ENCODE measurements at regions of chr9 and their contacts with region 1.

Region 1: DNA sequence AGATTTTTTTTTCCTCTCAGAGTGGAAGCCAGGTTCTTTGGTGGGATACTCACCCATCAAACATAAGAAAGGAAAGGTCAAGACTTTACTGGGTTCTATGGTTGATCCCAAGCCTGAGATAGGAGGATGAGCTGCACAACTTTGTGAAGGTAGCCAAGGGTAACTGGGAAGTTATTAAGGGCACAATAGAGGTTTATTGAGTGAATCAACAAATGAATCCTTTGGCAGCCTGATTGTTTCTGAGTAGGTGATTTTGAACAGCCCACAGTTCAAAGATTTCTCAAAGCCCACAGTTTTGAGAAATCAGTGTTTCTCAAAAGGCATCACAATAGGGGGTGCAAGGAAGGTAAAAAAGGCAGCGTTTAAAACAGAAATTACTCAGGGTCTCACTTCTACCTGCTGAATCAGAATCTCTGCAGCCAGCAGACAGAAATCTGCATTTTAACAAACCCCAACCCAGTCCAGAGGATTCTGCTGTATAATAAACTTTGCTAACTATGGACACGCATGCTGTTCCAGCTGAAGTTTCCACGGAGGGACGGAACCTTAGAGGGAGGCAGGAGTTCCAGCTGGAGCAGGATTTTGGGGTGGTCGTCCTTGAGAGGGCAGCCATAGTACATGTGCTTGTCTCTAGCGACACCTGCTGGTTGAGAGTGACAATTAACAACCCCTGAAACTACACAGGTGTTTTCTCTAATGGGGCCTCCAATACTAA is 32.7 kb upstream of the FSD1L start:
- DNase-seq: peak; percentile 53 to 59
- ATAC-seq: peak; percentile 81 to 88; a peak in 5 of 6 replicates
- H3K4me3 ChIP-seq: no peak overlapping the region
- H3K27ac ChIP-seq: peak overlapping the region; percentile 26 to 65; a peak in 3 of 6 replicates
- H3K4me1 ChIP-seq: peaks cover 10% of the 10 kb centered on the region; the same call in 1 of the 3 replicates
- CTCF ChIP-seq: peak; percentile 95
- EP300 ChIP-seq: no peak
- POLR2A ChIP-seq: no peak
- RAD21 ChIP-seq: peak; percentile 97 to 99

Region 2: DNA sequence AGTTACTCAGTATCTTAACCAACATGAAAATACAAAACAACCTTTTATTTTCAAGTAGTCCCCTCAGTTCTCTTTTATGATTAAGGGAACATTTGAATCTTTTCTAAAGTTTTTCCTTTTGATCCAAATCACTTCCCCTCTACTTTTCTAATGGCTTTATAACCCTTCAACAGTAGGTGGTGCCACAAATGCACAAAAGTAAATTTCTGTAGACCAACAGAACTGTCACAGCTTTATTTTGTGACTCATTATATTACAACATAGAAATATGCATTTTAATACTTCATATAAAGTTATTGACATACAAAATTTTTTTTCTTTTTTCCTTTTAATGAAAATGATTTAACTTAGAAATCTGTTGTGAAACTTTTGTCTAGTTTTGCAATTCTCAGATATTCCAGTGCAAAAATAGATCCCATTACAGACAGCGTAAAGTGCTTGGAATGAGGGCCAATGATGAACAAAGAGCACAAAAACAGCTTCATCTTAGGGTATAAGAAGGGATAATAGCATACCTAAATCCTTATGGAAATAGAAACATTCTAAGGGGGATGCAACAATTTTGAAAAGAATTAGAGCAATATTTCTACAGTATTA is 634.2 kb before region 1 on chr9:
- CTCF ChIA-PET with region 1: interaction called, 32 read pairs
- POLR2A ChIA-PET with region 1: no interaction called
- DNase-seq: peak; percentile 21 to 44
- ATAC-seq: peak; percentile 80
- H3K4me3 ChIP-seq: no peak overlapping the region
- H3K27ac ChIP-seq: no peak overlapping the region
- H3K4me1 ChIP-seq: 0 out of 3 replicates have a peak, but pooled peaks cover 3% of the 10 kb centered on the region
- CTCF ChIP-seq: peak; percentile 70
- EP300 ChIP-seq: no peak
- POLR2A ChIP-seq: no peak
- RAD21 ChIP-seq: peak; percentile 74 to 77

Region 3: DNA sequence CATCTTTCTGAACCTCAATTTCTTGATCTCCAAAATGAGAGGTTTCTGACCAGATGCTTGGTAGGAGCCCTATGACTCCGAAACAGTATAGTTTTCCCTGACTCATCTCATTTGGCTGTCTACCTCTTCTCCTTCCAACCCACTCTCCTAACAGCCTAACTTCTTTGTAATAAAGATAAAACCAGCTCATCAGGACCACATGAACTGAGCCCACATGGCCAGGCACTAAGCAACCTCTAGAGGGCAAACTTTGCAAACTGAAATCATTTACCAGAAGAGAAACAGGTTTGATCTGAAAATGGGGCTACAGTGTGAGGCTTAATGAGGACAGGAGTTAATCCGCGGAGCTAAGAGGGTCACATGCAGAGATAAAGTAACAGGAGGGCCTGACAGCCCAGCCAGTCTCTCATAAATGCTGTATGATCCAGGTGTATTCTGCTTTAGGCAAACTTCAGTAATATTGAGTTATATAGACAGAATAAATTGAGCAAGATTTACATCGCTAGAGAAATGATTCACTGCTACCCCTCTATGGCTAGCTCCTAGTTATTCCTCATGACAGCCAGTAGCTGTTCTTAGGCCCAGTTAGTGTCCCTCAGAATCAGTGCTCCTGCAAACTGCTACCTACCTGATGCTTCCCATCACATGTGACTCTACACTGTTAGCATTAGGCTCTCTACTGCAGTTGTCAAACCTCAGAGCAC is 551.8 kb before region 1 on chr9:
- CTCF ChIA-PET with region 1: interaction called, 18 read pairs
- POLR2A ChIA-PET with region 1: no interaction called
- DNase-seq: peak; percentile 68 to 75
- ATAC-seq: peak; percentile 84 to 94
- H3K4me3 ChIP-seq: no peak overlapping the region
- H3K27ac ChIP-seq: peak overlapping the region; percentile 28 to 53; a peak in 5 of 6 replicates
- H3K4me1 ChIP-seq: peaks cover 27% of the 10 kb centered on the region
- CTCF ChIP-seq: peak; percentile 80
- EP300 ChIP-seq: no peak
- POLR2A ChIP-seq: no peak
- RAD21 ChIP-seq: peak; percentile 84 to 89

Region 4: DNA sequence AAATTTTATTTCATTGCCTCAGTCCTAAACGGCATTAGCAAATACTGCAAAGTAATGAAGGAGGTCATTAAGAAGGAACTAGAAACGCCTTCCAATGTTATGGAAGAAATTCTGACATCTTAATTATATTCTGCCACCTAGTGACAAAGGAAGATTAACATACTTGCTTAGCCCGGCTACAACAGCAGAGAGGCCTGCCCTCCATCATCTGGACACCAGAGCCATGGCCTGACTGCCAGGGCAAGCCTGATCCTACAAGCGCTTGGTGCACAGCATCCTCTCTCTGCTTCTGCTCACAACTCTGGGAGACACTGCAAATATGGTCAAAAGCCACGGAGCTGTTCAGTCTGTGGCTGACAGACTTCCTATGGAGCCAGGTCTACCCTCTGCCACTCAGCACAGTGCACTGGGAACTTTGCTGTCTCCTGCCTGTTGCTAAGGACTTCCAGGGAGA is 257.9 kb before region 1 on chr9:
- CTCF ChIA-PET with region 1: interaction called, 185 read pairs
- POLR2A ChIA-PET with region 1: no interaction called
- DNase-seq: peak; percentile 78 to 80
- ATAC-seq: peak; percentile 93 to 95
- H3K4me3 ChIP-seq: no peak overlapping the region
- H3K27ac ChIP-seq: peak overlapping the region; percentile 38 to 74; a peak in 5 of 6 replicates
- H3K4me1 ChIP-seq: peaks cover 36% of the 10 kb centered on the region
- CTCF ChIP-seq: peak; percentile 75
- EP300 ChIP-seq: no peak
- POLR2A ChIP-seq: no peak
- RAD21 ChIP-seq: peak; percentile 85 to 93

Region 5: GRCh38 chr9:105244003-105244733 is 170.9 kb before region 1 on chr9 and contains the start of gene SLC44A1:
- CTCF ChIA-PET with region 1: interaction called, 45 read pairs
- POLR2A ChIA-PET with region 1: interaction called, 3 read pairs
- DNase-seq: peak; percentile 69 to 96
- ATAC-seq: peak; percentile 94 to 98
- H3K4me3 ChIP-seq: peak within 1 kb of the TSS; percentile 97
- H3K27ac ChIP-seq: peak within 1 kb of the TSS; percentile 93 to 95
- H3K4me1 ChIP-seq: peaks cover 35% of the 10 kb centered on the region
- CTCF ChIP-seq: no peak; the same call in 2 of the 3 replicates
- EP300 ChIP-seq: 0 out of 5 replicates have a peak, but pooled peaks of 1 of the 2 experiments have one; percentile 31
- POLR2A ChIP-seq: peak; percentile 56
- RAD21 ChIP-seq: peak; percentile 23 to 49; a peak in 2 of 5 replicates
- polyA plus RNA-seq, gene SLC44A1: 19.6 and 38.8 TPM in 2 replicates

Region 6: GRCh38 chr9:105392531-105392930 is 22.6 kb before region 1 on chr9:
- CTCF ChIA-PET with region 1: interaction called, 16 read pairs
- POLR2A ChIA-PET with region 1: no interaction called
- DNase-seq: no peak
- ATAC-seq: no peak
- H3K4me3 ChIP-seq: no peak overlapping the region
- H3K27ac ChIP-seq: no peak overlapping the region
- H3K4me1 ChIP-seq: no peaks in the 10 kb centered on the region
- CTCF ChIP-seq: no peak
- EP300 ChIP-seq: no peak
- POLR2A ChIP-seq: no peak
- RAD21 ChIP-seq: no peak

Region 7: DNA sequence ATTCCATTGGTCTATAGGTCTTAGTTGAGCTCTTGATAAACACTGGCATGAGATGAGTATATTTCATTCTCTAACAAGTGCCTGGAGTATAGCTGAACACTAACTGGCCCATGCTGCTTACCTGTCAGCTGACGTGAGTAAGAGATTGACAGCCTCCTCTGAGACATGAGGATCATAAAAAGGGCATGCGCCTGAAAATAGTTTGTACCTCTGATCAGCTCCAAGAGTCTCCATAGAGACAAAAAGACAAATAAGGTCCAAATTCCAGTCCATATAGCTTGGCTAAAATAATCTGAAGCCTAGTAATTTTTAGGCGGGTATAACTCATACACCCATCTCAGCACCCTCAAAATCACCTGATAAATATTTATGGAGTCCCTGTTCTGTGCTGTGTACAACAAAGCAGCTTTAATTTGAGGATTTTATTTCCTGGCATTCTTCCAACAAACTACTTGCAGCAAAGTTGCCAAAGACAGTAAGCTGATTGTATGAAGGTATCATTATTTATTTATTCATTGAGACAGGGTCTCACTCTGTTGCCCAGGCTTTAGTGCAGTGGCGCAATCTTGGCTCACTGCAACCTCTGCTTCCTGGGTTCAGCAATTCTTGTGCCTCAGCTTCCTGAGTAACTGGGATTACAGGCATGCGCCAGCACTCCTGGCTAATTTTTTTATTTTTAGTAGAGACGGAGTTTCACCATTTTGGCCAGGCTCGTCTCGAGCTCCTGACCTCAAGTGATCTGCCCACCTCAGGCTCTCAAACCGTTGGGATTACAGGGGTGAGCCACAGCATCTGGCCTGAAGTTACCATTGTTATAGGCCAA is 16.5 kb after region 1 on chr9:
- CTCF ChIA-PET with region 1: interaction called, 15 read pairs
- POLR2A ChIA-PET with region 1: no interaction called
- DNase-seq: no peak
- ATAC-seq: no peak
- H3K4me3 ChIP-seq: no peak overlapping the region
- H3K27ac ChIP-seq: no peak overlapping the region
- H3K4me1 ChIP-seq: no peaks in the 10 kb centered on the region
- CTCF ChIP-seq: no peak
- EP300 ChIP-seq: no peak
- POLR2A ChIP-seq: no peak
- RAD21 ChIP-seq: no peak

Measured in A549 (cell line).